Activated CD4-positive, alpha-beta memory T cell treated with anti-CD3 and anti-CD28 coated beads for 36 hours (primary cell): ENCODE measurements at regions of chr1 and their contacts with region 1.

Region 1: GRCh38 chr1:172357753-172358385 is 62.6 kb upstream of the C1orf105 start:
- DNase-seq: no peak
- H3K4me3 Mint-ChIP-seq: peak overlapping the region; percentile 11
- H3K27ac Mint-ChIP-seq: peak overlapping the region; percentile 85
- H3K4me1 Mint-ChIP-seq: peaks cover 66% of the 10 kb centered on the region
- H3K27me3 Mint-ChIP-seq: no peaks in the 10 kb centered on the region

Region 2: DNA sequence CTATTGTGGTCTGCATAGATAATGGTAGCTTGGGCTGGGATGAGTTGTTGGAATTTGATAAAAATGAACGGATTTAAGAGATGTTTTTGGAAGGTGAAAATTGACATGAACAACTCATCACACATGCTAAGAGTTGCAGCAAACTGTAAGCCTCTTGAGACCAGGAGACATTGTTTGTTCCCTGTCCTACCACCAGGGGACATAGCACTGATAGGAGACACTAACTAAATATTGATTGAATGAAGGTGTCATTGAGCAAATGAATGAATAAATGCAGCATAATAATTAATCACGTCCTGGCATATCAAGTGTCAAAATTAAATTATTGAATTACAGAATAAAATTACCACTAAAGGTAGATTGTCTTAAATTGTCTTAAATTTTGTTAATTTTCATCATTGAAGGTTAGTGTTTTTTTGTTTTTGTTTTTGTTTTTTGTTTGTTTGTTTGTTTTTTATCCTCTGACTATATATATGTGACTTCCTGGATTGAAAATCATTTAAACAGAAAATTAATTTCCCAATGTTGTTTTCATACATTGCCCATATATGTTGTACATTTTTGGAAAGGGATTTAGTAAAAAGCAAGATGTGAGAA is 222.7 kb before region 1 on chr1:
- CTCF ChIA-PET with region 1: interaction called, 9 read pairs
- POLR2A ChIA-PET with region 1: no interaction called
- intact Hi-C with region 1: loop called (anchors 1 kb)
- DNase-seq: no peak
- H3K4me3 Mint-ChIP-seq: no peak overlapping the region
- H3K27ac Mint-ChIP-seq: peak overlapping the region; percentile 29
- H3K4me1 Mint-ChIP-seq: peaks cover 18% of the 10 kb centered on the region
- H3K27me3 Mint-ChIP-seq: no peaks in the 10 kb centered on the region

Region 3: DNA sequence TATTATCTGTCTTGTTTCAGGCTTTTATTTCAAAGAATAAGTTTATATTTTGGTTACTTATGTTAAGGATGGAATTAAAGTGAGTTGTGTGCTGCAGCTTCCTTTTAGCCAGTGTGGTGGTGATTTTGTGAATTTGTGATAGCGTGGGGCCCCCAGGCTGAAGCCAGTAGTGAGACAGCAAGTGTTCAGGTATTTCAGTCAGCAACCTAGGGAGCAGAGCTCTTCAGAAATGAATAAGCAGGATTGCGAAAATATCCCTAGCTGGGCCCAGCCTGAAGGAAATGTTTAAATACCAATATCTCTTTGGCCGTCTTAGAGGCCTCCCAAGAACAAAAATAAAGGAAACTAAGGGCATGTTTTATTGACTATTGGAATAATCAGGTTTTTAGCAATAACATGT is 88.2 kb before region 1 on chr1:
- CTCF ChIA-PET with region 1: interaction called, 10 read pairs
- POLR2A ChIA-PET with region 1: interaction called, 3 read pairs
- intact Hi-C with region 1: loop called (anchors 1 kb)
- DNase-seq: peak; percentile 41
- H3K4me3 Mint-ChIP-seq: no peak overlapping the region
- H3K27ac Mint-ChIP-seq: peak overlapping the region; percentile 49
- H3K4me1 Mint-ChIP-seq: peaks cover 48% of the 10 kb centered on the region
- H3K27me3 Mint-ChIP-seq: no peaks in the 10 kb centered on the region

Region 4: GRCh38 chr1:172343240-172344160 is 14.4 kb before region 1 on chr1:
- CTCF ChIA-PET with region 1: interaction called, 22 read pairs
- POLR2A ChIA-PET with region 1: interaction called, 31 read pairs
- intact Hi-C with region 1: loop called (anchors 1 kb)
- DNase-seq: no peak
- H3K4me3 Mint-ChIP-seq: no peak overlapping the region
- H3K27ac Mint-ChIP-seq: peak overlapping the region; percentile 21
- H3K4me1 Mint-ChIP-seq: peaks cover 47% of the 10 kb centered on the region
- H3K27me3 Mint-ChIP-seq: no peaks in the 10 kb centered on the region

Region 5: DNA sequence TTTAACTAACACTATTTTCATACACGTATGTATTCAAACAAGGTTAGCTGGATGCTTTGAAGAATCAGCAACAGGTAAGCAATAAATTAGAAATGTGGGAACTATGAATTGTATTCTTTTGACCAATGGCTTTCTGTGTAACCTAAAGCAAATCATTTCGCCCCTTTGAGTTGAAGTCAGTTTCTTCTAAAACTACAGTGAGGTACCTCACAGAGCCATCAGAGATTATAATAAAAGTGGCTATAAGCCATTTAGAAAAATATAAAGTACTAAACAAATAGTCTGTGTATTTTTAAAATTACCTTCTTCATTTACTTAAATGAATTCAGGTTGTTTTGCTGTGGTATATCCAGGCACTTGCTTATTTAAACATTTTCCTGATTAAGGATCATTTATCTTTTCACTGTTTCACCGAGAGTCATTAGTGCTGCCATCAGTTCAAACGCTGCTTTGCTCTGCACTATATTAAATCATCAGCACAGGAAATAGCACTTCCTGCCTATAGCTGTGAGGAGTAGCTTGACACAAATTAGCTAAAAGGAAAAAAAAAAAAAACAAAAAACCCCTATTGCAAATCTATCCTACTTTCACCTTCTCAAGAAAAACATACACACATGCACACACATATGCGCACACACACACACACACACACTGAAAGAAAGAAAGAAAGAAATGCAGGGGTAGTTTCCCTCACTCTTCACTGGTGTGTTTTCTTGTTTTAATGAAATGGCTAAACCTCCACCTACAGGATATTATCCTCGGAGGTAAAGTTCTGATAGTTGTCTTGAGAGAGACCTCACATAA is 22.8 kb after region 1 on chr1:
- CTCF ChIA-PET with region 1: interaction called, 4 read pairs
- POLR2A ChIA-PET with region 1: interaction called, 9 read pairs
- intact Hi-C with region 1: loop called (anchors 1 kb)
- DNase-seq: peak; percentile 45
- H3K4me3 Mint-ChIP-seq: peak overlapping the region; percentile 48
- H3K27ac Mint-ChIP-seq: peak overlapping the region; percentile 83
- H3K4me1 Mint-ChIP-seq: peaks cover 28% of the 10 kb centered on the region
- H3K27me3 Mint-ChIP-seq: no peaks in the 10 kb centered on the region

Region 6: DNA sequence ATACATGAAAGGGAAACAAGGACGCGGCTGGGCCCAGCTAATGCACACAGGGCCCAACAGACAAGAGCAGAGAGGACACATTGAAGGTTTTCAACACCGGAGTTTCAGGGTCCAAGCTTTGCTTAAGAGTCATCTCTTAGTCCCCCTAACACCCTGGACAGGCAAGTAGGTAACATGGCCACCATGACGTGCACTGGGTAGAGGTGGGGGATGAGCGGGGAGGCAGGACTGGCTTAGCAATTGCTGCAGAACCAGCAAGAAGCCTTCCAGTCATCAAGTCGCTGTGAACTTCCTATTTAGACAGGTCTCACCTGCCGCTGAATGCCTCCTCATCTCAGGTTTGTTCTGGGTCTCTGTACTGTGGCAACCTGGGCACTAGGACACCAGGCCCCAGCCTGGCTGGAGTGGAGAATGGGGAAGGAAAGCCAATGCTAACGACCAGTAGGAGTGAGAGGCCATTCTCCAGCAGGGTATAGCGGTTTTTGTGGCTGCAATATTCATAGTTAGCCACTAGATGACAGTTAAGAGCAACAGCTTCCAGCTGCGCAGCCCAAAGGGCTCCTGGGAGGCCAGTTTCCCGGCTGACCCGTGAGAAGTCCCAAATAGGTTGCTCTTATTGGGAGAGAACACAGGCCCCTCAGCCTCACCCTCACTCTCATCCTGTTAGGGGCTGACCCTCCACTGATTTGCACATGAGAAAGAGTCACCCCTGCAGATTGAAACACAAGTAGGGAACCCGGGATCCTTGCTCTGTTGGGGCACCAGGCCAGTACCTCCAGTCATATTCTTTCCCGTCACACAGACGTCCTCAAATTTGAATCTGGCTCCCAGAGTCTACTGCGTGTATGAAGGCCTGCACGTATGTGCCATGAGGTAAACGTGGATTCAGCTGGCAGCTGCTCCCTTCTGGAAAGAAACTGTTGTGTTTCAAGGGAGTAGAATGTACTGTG is 92.0 kb after region 1 on chr1:
- CTCF ChIA-PET with region 1: interaction called, 3 read pairs
- POLR2A ChIA-PET with region 1: no interaction called
- intact Hi-C with region 1: loop called (anchors 5 kb)
- DNase-seq: peak; percentile 47
- H3K4me3 Mint-ChIP-seq: peak overlapping the region; percentile 36
- H3K27ac Mint-ChIP-seq: no peak overlapping the region
- H3K4me1 Mint-ChIP-seq: peaks cover 31% of the 10 kb centered on the region
- H3K27me3 Mint-ChIP-seq: no peaks in the 10 kb centered on the region

Region 7: DNA sequence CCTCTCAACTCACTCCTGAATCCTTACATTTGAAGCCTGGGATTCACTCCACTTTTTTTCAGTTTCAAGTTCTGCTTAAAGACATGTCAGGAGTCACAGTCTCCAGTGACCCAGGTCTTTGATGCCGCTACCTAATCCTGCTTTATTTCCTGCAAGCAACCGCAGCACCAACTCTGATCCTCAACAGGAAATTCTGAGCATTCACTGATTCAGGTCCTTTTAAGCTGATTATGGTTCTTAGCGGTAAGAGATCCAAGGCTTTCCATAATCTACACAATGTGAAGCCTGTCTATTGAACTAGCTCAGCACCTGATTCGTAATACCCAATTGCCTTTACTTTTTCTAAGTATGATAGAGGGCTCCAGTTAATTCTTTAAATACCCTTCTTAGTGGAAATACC is 129.7 kb after region 1 on chr1:
- CTCF ChIA-PET with region 1: no interaction called
- POLR2A ChIA-PET with region 1: no interaction called
- intact Hi-C with region 1: no loop called
- DNase-seq: no peak
- H3K4me3 Mint-ChIP-seq: no peak overlapping the region
- H3K27ac Mint-ChIP-seq: no peak overlapping the region
- H3K4me1 Mint-ChIP-seq: peaks cover 8% of the 10 kb centered on the region
- H3K27me3 Mint-ChIP-seq: no peaks in the 10 kb centered on the region

Region 8: GRCh38 chr1:172789866-172790644 is 432.2 kb after region 1 on chr1:
- CTCF ChIA-PET with region 1: no interaction called
- POLR2A ChIA-PET with region 1: no interaction called
- intact Hi-C with region 1: no loop called
- DNase-seq: no peak
- H3K4me3 Mint-ChIP-seq: no peak overlapping the region
- H3K27ac Mint-ChIP-seq: no peak overlapping the region
- H3K4me1 Mint-ChIP-seq: no peaks in the 10 kb centered on the region
- H3K27me3 Mint-ChIP-seq: no peaks in the 10 kb centered on the region